ENCODE measurements at regions of chr3 and their contacts with region 1.

Region 1: DNA sequence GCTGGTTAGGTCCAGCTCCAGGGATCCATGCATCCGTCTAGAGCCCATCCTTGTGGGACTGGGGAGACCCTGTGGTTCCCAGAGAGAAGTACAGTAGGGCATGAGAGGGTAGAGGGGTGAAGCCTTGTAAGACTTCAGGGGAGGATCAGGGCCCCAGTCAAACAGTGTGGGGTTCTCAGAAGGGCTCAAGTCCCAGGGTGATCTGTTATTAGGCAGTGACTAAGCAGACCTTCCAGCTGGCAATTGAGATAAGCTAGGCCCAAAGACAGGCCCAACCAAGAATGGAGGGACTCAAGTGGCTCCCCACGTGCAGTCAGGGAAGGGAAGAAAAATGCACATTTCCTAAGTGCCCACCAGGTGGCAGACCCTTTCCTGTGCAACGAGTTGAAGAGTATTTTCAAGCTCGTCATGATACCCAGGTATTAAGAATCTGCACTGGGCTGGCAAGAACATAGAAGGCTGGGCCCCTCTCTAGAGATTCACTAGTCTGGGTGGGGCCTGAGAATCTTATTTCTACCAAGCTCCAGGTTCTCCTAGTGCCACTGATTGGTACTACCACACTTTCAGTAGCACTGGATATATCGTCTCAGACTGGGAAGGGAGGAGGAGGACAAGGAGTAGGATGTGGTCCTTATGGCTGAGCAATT is 240.8 kb downstream of the NR1D2 start:
- DNase-seq: peak; percentile 26
- H3K4me3 ChIP-seq: no peak overlapping the region
- H3K27ac ChIP-seq: no peak overlapping the region
- H3K27me3 ChIP-seq: no peaks in the 10 kb centered on the region
- CTCF ChIP-seq: peak; percentile 71

Region 2: DNA sequence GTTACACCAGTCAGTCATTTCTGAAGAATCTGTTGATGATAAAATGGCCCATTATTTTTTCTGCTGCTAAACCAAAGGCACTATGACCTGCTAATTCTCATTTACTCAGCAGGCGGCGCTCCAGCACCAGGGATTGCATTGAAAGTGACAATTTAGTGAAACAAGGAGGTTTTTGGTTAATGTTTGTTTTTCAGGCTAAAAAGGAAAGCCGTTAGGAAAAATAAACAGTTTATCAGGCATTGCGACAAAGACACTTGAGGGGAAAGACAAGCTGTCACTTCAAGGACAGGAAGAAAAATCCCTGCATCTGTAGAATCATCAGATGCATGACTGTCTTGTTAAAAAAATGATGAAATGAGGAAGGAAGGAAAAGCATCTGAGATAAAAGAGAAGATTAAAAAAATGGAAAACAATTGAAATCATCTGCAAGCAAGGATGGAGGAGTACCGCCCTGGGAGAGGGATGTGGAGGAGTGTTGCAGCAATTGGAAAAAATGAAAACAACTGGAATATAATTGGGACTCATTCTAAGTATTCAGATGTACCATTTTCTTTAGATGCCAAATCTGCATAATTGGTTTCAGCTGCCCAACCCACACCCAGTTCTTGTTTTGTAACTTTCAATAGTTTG is 186.7 kb before region 1 on chr3:
- CTCF ChIA-PET with region 1: interaction called, 10 read pairs
- POLR2A ChIA-PET with region 1: no interaction called
- DNase-seq: peak; percentile 18
- H3K4me3 ChIP-seq: no peak overlapping the region
- H3K27ac ChIP-seq: no peak overlapping the region
- H3K27me3 ChIP-seq: no peaks in the 10 kb centered on the region
- CTCF ChIP-seq: peak; percentile 97

Region 3: DNA sequence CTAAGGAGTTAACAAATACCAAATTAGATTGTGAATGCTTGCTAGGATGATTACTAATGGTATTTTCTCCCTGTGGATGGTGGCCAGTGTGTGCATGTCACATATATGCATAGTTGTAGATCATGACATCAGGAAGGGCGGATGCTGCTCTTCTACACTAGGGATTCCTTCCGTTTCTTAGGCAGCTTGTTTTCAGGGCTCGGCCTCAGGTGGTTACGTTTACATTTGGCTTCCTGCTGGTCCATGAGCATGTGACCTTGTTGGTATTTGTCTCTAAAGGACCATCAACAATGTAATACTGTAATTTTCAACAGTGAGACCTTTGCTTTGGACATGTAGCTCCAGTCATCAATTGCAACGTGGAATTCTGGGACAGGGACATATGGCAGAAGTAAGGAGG is 19.3 kb before region 1 on chr3:
- CTCF ChIA-PET with region 1: interaction called, 10 read pairs
- POLR2A ChIA-PET with region 1: no interaction called
- DNase-seq: no peak
- H3K4me3 ChIP-seq: no peak overlapping the region
- H3K27ac ChIP-seq: no peak overlapping the region
- H3K27me3 ChIP-seq: no peaks in the 10 kb centered on the region
- CTCF ChIP-seq: no peak

Region 4: DNA sequence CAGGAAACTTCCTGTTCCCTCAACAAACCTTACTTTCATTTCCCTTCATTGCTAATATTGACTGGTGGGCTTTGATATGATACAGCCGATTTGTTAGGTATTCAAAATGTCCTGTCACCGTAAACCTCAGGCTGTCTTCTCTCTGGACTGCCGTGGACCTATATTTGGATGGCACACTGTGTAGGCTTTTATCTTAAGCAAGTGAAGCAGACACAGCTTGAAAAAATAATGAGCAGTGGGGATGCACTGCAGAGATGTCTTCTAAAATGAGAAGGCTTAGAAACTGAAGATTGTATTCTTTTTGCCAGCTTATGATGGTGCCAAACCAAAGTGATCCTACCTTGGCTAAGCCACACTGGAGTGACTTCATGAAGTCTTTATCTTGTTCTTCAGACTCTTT is 25.5 kb after region 1 on chr3:
- CTCF ChIA-PET with region 1: interaction called, 19 read pairs
- POLR2A ChIA-PET with region 1: no interaction called
- DNase-seq: no peak
- H3K4me3 ChIP-seq: no peak overlapping the region
- H3K27ac ChIP-seq: no peak overlapping the region
- H3K27me3 ChIP-seq: peaks cover 5% of the 10 kb centered on the region
- CTCF ChIP-seq: no peak

Region 5: GRCh38 chr3:24410861-24411260 is 225.0 kb after region 1 on chr3:
- CTCF ChIA-PET with region 1: no interaction called
- POLR2A ChIA-PET with region 1: no interaction called
- DNase-seq: no peak
- H3K4me3 ChIP-seq: no peak overlapping the region
- H3K27ac ChIP-seq: no peak overlapping the region
- H3K27me3 ChIP-seq: no peaks in the 10 kb centered on the region
- CTCF ChIP-seq: no peak

Region 6: DNA sequence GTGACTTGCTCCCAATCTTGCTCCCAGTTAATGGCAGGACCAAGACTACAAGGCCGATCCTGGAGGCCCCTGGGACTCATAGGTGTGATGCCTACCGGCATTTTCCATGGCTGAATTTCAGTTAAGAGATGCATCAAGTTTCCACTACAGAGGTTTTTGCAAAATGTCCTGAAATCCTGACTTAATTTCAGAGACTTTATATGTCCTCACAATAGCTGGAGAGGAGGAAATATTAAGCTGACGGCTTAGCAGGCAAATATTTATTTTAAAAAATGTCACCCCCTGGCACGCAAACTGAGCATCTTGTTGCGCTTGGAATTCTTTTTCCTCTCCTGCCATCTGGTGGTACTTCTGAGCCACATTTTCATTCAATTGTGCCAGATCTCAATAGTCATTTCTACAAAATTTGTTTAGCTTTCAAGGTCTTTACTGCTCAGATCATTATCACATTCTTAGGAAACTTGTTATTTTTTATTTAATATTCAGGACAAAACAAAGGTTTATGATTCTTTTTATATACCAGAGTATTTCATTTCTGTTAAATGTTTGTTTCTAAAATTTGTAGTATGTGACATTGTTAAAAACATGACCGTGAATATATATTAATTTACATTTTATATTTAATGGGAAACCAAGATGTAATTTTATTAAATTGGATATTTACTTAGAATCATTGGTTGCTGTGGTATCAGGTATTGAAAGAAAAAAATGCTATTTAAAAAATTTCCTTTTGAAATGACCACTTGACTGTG is 497.9 kb after region 1 on chr3:
- CTCF ChIA-PET with region 1: interaction called, 26 read pairs
- POLR2A ChIA-PET with region 1: no interaction called
- DNase-seq: peak; percentile 41
- H3K4me3 ChIP-seq: no peak overlapping the region
- H3K27ac ChIP-seq: no peak overlapping the region
- H3K27me3 ChIP-seq: no peaks in the 10 kb centered on the region
- CTCF ChIP-seq: peak; percentile 71

Measured in AG04450 (cell line).